ENCODE measurements at regions of chr1 and their contacts with region 1.

Region 1: DNA sequence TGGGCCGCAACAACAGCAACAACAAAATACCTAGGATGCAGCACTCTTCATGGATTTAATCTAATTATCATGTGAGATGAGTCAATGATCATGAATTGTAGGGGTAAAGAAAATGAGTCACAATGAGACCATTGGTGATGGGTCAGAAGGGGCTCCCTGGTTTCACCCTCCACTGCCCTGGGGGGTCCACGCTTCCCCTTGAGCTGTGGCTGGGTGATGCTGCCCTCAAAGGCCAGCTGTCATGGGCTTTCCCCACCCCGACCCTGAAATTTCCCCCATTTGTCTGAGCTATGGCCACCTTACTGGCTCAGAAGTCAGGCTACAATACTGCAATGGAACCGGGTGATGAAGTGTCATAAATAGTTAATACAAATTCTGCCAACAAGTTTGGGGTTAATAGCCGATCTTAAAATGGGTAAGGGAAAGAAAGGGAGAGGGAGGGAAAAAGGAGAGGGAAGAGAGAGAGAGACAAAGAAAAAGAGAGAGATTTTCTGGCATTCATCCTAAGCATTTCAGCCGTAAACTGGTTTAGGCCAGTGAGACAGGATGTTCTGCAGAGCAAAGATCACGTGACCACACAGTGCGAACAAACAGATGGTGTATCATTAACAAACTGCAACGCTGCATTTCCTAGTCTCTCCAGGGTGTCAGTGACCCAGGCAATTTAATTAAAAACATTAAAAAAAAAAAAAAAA is 143.4 kb upstream of the ERRFI1 start:
- DNase-seq: peak; percentile 59
- ATAC-seq: peak; percentile 76
- H3K4me3 ChIP-seq: no peak overlapping the region
- H3K27ac ChIP-seq: peak overlapping the region; percentile 94
- H3K4me1 ChIP-seq: peaks cover 33% of the 10 kb centered on the region
- H3K27me3 ChIP-seq: no peaks in the 10 kb centered on the region
- CTCF ChIP-seq: no peak
- EP300 ChIP-seq: peak in 1 of 2 experiments; percentile 65; a peak in 2 of 4 replicates
- POLR2A ChIP-seq: no peak
- RAD21 ChIP-seq: no peak

Region 2: DNA sequence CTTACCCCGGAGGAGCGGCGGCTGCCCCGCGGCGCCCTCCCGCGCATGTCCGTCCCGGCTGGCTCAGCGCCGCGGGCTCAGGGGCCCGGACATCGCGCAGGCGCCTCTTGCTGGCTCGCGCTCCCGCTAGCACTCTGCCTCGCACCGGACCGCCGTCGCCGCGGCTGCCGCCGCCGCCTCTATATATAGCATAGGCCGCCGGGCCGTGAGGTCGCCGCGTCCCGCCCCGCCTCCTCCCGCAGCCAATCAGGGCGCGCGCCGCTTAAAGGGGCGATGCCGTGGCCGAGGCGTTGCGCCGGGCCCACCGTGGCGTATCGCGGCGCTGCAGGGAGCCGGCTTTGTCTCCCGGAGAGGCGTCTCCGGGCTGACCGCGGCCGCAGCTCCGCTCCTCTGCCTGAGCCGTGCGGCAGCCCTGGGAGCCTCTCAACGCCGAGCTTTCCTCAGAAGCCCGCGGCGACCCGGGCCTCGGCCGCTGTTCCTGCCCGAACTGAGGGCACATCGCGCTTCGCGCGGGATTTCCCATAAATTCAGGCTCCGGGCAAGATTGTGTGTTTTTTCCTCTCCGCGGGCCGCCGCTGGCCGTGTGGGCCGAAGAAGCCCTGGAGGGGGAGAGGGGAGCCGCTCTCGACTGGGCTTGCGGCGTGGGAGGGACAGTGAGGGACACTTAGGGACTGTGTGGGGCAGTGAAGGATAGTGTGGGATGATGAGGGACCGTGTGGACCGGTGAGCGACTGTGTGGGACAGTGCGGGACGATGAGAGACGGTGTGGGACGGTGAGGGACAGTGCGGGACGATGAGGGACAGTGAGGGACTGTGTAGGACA is 143.1 kb before region 1 on chr1 and contains the start of gene ERRFI1:
- CTCF ChIA-PET with region 1: no interaction called
- POLR2A ChIA-PET with region 1: interaction called, 7 read pairs
- RAD21 ChIA-PET with region 1: no interaction called
- SMC1A ChIA-PET with region 1: no interaction called
- in situ Hi-C with region 1: no loop called
- intact Hi-C with region 1: loop called (anchors 5 kb)
- DNase-seq: peak; percentile 28
- ATAC-seq: peak; percentile 97
- H3K4me3 ChIP-seq: peak within 1 kb of the TSS; percentile 75
- H3K27ac ChIP-seq: no peak within 1 kb of the TSS
- H3K4me1 ChIP-seq: peaks cover 5% of the 10 kb centered on the region
- H3K27me3 ChIP-seq: peaks cover 0 to 4% of the 10 kb centered on the region in 2 experiments; a peak in 1 of 4 replicates
- CTCF ChIP-seq: no peak
- EP300 ChIP-seq: no peak
- POLR2A ChIP-seq: peak; percentile 93
- RAD21 ChIP-seq: no peak
- polyA plus RNA-seq, gene ERRFI1: 1.6 to 2.4 TPM

Region 3: GRCh38 chr1:8097077-8097799 is 72.3 kb before region 1 on chr1:
- CTCF ChIA-PET with region 1: interaction called, 4 read pairs
- POLR2A ChIA-PET with region 1: interaction called, 13 read pairs
- RAD21 ChIA-PET with region 1: interaction called, 22 read pairs
- SMC1A ChIA-PET with region 1: interaction called, 14 read pairs
- in situ Hi-C with region 1: no loop called
- intact Hi-C with region 1: loop called (anchors 1 kb)
- DNase-seq: peak; percentile 79
- ATAC-seq: peak; percentile 97
- H3K4me3 ChIP-seq: peak overlapping the region; percentile 55
- H3K27ac ChIP-seq: peak overlapping the region; percentile 89
- H3K4me1 ChIP-seq: peaks cover 5% of the 10 kb centered on the region; the same call in 1 of the 2 replicates
- H3K27me3 ChIP-seq: no peaks in the 10 kb centered on the region
- CTCF ChIP-seq: no peak
- EP300 ChIP-seq: peak; percentile 51 to 73; a peak in 3 of 4 replicates
- POLR2A ChIP-seq: no peak
- RAD21 ChIP-seq: 0 out of 2 replicates have a peak, but pooled peaks have one; percentile 14

Region 4: DNA sequence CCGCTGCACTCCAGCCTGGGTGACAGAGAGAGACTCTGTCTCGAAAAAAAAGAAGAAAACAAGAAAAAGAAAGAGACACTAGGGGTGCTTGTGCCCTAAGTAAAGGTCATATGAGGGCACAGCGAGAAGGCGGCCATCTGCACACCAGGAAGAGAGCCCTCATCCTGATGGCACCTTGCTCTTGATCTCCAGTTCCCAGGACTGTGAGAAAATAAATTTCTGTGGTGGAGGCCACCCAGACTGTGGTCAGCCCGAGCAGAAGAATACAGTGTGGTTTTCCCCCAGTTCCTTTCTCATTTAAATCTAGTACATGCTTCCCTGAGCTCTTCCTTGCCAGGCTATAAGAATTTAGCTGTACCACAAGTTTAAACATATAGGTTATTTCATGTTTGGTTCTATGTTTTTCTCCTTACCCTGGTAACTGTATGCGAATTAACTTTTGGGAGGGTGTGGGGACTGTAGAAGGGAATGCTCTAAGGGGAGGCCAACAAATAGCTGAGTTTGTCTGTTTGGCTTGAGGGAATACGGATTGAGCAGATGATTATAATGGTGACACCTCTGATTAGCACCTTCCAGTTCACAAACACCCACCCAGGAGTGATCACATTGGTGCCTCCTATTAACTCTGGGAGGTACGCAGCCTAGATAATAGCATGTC is 23.8 kb before region 1 on chr1:
- CTCF ChIA-PET with region 1: no interaction called
- POLR2A ChIA-PET with region 1: interaction called, 11 read pairs
- RAD21 ChIA-PET with region 1: interaction called, 10 read pairs
- SMC1A ChIA-PET with region 1: interaction called, 12 read pairs
- in situ Hi-C with region 1: no loop called
- intact Hi-C with region 1: no loop called
- DNase-seq: no peak
- ATAC-seq: peak; percentile 51
- H3K4me3 ChIP-seq: no peak overlapping the region
- H3K27ac ChIP-seq: peak overlapping the region; percentile 31; the same call in 1 of the 2 replicates
- H3K4me1 ChIP-seq: peaks cover 11% of the 10 kb centered on the region
- H3K27me3 ChIP-seq: no peaks in the 10 kb centered on the region
- CTCF ChIP-seq: no peak
- EP300 ChIP-seq: no peak
- POLR2A ChIP-seq: no peak
- RAD21 ChIP-seq: no peak

Region 5: DNA sequence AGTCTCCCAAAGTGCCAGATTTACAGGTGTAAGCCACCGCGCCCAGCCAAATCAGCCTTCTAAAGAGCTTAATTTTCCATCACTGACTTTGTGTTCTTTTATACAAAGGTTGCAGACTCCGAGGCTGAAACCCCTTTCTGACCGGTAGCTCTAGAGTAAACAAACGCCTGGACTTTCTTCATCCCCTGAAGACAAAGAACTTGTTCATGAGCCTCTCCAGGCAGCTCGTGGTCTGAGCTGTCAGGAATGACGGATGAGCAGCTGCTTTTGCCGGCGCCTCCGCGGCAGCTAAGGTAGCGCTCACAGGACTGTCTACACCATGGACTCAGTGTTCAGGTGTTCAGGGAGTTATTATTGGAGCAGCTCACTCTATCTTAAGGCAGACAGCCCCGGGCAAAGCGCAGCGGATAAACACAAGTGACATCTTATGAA is 14.9 kb before region 1 on chr1:
- CTCF ChIA-PET with region 1: interaction called, 3 read pairs
- POLR2A ChIA-PET with region 1: interaction called, 8 read pairs
- RAD21 ChIA-PET with region 1: interaction called, 10 read pairs
- SMC1A ChIA-PET with region 1: interaction called, 9 read pairs
- in situ Hi-C with region 1: no loop called
- intact Hi-C with region 1: no loop called
- DNase-seq: no peak
- ATAC-seq: no peak
- H3K4me3 ChIP-seq: no peak overlapping the region
- H3K27ac ChIP-seq: no peak overlapping the region
- H3K4me1 ChIP-seq: peaks cover 7% of the 10 kb centered on the region
- H3K27me3 ChIP-seq: no peaks in the 10 kb centered on the region
- CTCF ChIP-seq: no peak
- EP300 ChIP-seq: no peak
- POLR2A ChIP-seq: no peak
- RAD21 ChIP-seq: no peak

Region 6: GRCh38 chr1:8283058-8283884 is 113.8 kb after region 1 on chr1:
- CTCF ChIA-PET with region 1: no interaction called
- POLR2A ChIA-PET with region 1: no interaction called
- RAD21 ChIA-PET with region 1: no interaction called
- SMC1A ChIA-PET with region 1: no interaction called
- in situ Hi-C with region 1: no loop called
- intact Hi-C with region 1: no loop called
- DNase-seq: peak; percentile 64
- ATAC-seq: peak; percentile 98
- H3K4me3 ChIP-seq: peak overlapping the region; percentile 27; the same call in 1 of the 2 replicates
- H3K27ac ChIP-seq: peak overlapping the region; percentile 79
- H3K4me1 ChIP-seq: peaks cover 27% of the 10 kb centered on the region
- H3K27me3 ChIP-seq: no peaks in the 10 kb centered on the region
- CTCF ChIP-seq: no peak
- EP300 ChIP-seq: peak; percentile 92 to 94
- POLR2A ChIP-seq: peak; percentile 66
- RAD21 ChIP-seq: 0 out of 2 replicates have a peak, but pooled peaks have one; percentile 26